GM10248 (cell line): ENCODE measurements at regions of chr12 and their contacts with region 1.

Region 1: DNA sequence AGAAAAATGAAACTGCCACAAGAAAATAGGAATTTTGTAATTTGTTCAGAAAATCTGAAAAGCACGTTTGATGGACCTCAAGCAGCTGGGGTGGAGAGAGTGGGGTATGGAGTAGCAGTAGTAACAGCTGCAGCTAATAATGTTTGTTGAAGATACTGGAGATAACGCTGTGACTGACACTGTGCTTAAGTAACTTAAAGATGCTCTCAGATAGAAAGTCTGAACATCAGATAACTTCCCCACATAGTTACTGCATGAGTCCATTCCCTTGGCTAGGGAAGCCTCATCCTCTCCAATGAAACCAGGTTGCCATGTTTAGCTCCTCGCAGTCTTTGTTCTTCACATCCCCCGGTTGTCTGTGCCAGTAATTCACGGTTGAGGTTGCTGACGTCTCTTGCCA is 24.9 kb downstream of the RMST start:
- DNase-seq: no peak
- CTCF ChIP-seq: no peak

Region 2: DNA sequence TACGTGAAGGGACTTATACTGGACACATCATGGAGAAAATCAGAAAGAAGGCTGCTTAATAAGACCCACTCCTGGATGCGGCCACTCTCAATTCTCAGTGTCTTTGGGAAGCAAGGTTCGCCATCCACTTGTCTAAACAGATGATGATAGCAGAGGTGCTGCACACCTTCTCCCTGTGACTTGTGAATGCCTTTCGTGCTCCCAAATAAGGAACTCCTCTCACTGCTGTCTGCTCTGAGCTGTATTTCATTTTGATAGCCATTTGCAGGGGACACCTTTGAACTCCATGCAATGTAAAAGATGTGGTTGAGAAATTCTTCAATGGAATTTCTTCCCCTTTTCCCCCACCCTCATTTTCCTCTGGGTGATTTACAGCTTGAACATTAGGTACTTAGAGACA is 13.3 kb before region 1 on chr12:
- CTCF ChIA-PET with region 1: interaction called, 15 read pairs
- POLR2A ChIA-PET with region 1: no interaction called
- DNase-seq: no peak
- CTCF ChIP-seq: no peak

Region 3: DNA sequence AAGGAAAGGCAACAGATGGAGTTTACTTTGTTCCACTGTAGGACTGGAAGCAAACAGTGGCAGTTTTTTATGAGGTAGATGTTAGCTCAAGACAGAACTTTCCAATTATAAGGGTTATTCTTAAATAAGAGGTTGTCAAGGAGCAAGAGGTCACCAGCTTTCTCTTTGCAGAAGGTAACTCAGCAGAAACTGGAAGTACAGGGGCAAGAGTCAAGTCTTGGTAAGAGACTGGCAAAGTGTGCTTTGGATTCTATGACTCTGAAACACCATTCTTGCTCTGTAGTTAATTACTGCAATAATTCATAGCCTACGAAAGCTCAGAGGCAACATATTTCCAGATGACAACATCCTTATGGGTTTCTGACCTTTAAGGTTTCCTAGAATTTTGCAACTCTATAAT is 26.5 kb after region 1 on chr12:
- CTCF ChIA-PET with region 1: interaction called, 11 read pairs
- POLR2A ChIA-PET with region 1: no interaction called
- DNase-seq: no peak
- CTCF ChIP-seq: no peak